ENCODE measurements at regions of chr2 and their contacts with region 1.

Region 1: DNA sequence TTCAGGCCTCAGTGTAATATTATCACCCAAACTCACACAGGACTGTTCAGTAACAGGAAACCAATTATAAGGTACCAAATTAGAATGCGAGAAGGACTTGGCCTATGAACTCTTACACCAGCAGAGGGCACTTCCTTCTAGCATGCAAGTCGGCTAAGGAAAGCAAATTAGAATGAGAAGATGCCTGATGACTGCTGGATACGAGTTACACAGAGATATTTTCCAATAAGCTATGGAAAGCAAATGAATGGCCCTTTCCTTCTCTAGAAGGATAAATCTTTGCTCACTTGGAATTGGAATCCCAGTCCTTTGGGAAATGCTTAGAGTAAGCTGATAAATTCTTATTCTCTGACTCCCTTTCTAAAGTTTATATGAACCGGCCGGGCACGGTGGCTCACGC is 109.8 kb downstream of the AP1S3 start:
- DNase-seq: peak; percentile 72 to 73
- H3K4me3 ChIP-seq: no peak overlapping the region
- H3K4me3 Mint-ChIP-seq: no peak overlapping the region
- H3K27ac Mint-ChIP-seq: no peak overlapping the region
- H3K4me1 ChIP-seq: peaks cover 32% of the 10 kb centered on the region
- H3K4me1 Mint-ChIP-seq: peaks cover 21% of the 10 kb centered on the region
- H3K27me3 ChIP-seq: no peaks in the 10 kb centered on the region
- H3K27me3 Mint-ChIP-seq: no peaks in the 10 kb centered on the region
- CTCF ChIP-seq: peak; percentile 82 to 88

Region 2: GRCh38 chr2:223501641-223502040 is 225.9 kb before region 1 on chr2:
- CTCF ChIA-PET with region 1: no interaction called
- POLR2A ChIA-PET with region 1: no interaction called
- intact Hi-C with region 1: no loop called
- DNase-seq: no peak
- H3K4me3 ChIP-seq: no peak overlapping the region
- H3K4me3 Mint-ChIP-seq: no peak overlapping the region
- H3K27ac Mint-ChIP-seq: no peak overlapping the region
- H3K4me1 ChIP-seq: no peaks in the 10 kb centered on the region
- H3K4me1 Mint-ChIP-seq: no peaks in the 10 kb centered on the region
- H3K27me3 ChIP-seq: 0 out of 2 replicates have a peak, but pooled peaks cover 4% of the 10 kb centered on the region
- H3K27me3 Mint-ChIP-seq: peaks cover 11% of the 10 kb centered on the region
- CTCF ChIP-seq: no peak

Region 3: GRCh38 chr2:223641097-223641496 is 86.5 kb before region 1 on chr2:
- CTCF ChIA-PET with region 1: no interaction called
- POLR2A ChIA-PET with region 1: no interaction called
- intact Hi-C with region 1: no loop called
- DNase-seq: peak; percentile 28 to 54
- H3K4me3 ChIP-seq: no peak overlapping the region
- H3K4me3 Mint-ChIP-seq: no peak overlapping the region
- H3K27ac Mint-ChIP-seq: no peak overlapping the region
- H3K4me1 ChIP-seq: no peaks in the 10 kb centered on the region
- H3K4me1 Mint-ChIP-seq: no peaks in the 10 kb centered on the region
- H3K27me3 ChIP-seq: no peaks in the 10 kb centered on the region
- H3K27me3 Mint-ChIP-seq: no peaks in the 10 kb centered on the region
- CTCF ChIP-seq: no peak

Region 4: GRCh38 chr2:223674998-223675609 is 52.5 kb before region 1 on chr2:
- CTCF ChIA-PET with region 1: no interaction called
- POLR2A ChIA-PET with region 1: no interaction called
- intact Hi-C with region 1: loop called (anchors 1 kb)
- DNase-seq: peak; percentile 52 to 70
- H3K4me3 ChIP-seq: no peak overlapping the region
- H3K4me3 Mint-ChIP-seq: no peak overlapping the region
- H3K27ac Mint-ChIP-seq: no peak overlapping the region
- H3K4me1 ChIP-seq: no peaks in the 10 kb centered on the region
- H3K4me1 Mint-ChIP-seq: peaks cover 7% of the 10 kb centered on the region
- H3K27me3 ChIP-seq: no peaks in the 10 kb centered on the region
- H3K27me3 Mint-ChIP-seq: peaks cover 3% of the 10 kb centered on the region
- CTCF ChIP-seq: peak; percentile 88 to 97

Region 5: GRCh38 chr2:223692191-223692947 is 35.2 kb before region 1 on chr2:
- CTCF ChIA-PET with region 1: interaction called, 5 read pairs
- POLR2A ChIA-PET with region 1: no interaction called
- intact Hi-C with region 1: loop called (anchors 1 kb)
- DNase-seq: peak; percentile 71 to 76
- H3K4me3 ChIP-seq: no peak overlapping the region
- H3K4me3 Mint-ChIP-seq: no peak overlapping the region
- H3K27ac Mint-ChIP-seq: no peak overlapping the region
- H3K4me1 ChIP-seq: no peaks in the 10 kb centered on the region
- H3K4me1 Mint-ChIP-seq: no peaks in the 10 kb centered on the region
- H3K27me3 ChIP-seq: no peaks in the 10 kb centered on the region
- H3K27me3 Mint-ChIP-seq: no peaks in the 10 kb centered on the region
- CTCF ChIP-seq: peak; percentile 75 to 96

Region 6: DNA sequence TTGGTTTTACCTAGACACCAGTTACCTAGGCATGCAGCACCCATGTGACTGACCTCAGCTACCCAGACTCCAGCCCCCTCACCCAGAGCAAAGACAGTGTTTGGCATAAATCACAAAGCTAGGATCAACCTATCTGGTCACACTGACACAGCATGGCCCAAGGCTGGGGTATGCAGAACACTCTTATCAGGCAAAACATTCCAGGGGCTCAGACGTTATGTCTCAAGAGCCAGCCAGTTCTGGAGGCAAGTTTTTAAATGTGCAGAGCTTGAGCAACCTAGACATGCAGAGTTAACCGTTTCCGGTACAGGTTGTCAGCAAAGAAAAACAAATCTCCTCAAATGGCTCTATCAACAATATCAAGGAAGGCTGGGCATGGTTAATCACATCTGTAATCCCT is 17.0 kb after region 1 on chr2:
- CTCF ChIA-PET with region 1: interaction called, 8 read pairs
- POLR2A ChIA-PET with region 1: no interaction called
- intact Hi-C with region 1: loop called (anchors 1 kb)
- DNase-seq: peak; percentile 89 to 90
- H3K4me3 ChIP-seq: no peak overlapping the region
- H3K4me3 Mint-ChIP-seq: peak overlapping the region; percentile 52
- H3K27ac Mint-ChIP-seq: peak overlapping the region; percentile 85
- H3K4me1 ChIP-seq: peaks cover 34% of the 10 kb centered on the region
- H3K4me1 Mint-ChIP-seq: peaks cover 37% of the 10 kb centered on the region
- H3K27me3 ChIP-seq: no peaks in the 10 kb centered on the region
- H3K27me3 Mint-ChIP-seq: no peaks in the 10 kb centered on the region
- CTCF ChIP-seq: no peak

Region 7: DNA sequence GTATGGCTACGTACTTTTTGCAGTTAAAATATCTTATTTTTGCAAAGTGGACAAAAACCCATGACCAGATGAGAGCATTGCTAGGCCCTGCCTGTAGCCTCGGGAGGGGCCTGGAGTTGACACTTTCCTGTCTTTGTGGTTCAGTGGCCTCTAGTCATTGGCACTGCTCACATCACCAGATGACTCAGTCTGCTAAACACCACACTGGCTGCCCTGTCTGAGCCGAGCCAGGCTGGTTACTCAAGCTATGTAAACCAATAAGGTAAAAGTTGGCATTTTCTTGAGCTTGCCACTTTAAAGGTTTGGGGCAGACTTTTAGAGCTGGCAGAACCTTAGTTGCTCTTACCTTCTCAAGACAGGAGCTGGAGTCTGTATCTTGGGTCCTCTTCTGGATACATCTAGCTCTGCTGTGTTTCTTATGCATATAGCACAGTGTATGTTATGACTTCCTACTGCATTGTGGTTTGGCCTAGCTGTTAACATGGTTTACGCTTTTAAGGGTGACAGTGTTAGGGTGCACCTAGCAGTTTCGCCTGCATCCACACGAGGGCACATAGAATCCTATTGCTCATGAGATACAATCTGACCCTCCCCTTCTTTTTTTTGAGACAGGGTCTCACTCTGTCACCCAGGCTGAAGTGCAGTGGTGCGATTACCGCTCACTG is 33.4 kb after region 1 on chr2:
- CTCF ChIA-PET with region 1: interaction called, 4 read pairs
- POLR2A ChIA-PET with region 1: no interaction called
- intact Hi-C with region 1: loop called (anchors 1 kb)
- DNase-seq: no peak
- H3K4me3 ChIP-seq: no peak overlapping the region
- H3K4me3 Mint-ChIP-seq: no peak overlapping the region
- H3K27ac Mint-ChIP-seq: peak overlapping the region; percentile 94
- H3K4me1 ChIP-seq: peaks cover 42% of the 10 kb centered on the region
- H3K4me1 Mint-ChIP-seq: peaks cover 48% of the 10 kb centered on the region
- H3K27me3 ChIP-seq: no peaks in the 10 kb centered on the region
- H3K27me3 Mint-ChIP-seq: no peaks in the 10 kb centered on the region
- CTCF ChIP-seq: no peak

Region 8: DNA sequence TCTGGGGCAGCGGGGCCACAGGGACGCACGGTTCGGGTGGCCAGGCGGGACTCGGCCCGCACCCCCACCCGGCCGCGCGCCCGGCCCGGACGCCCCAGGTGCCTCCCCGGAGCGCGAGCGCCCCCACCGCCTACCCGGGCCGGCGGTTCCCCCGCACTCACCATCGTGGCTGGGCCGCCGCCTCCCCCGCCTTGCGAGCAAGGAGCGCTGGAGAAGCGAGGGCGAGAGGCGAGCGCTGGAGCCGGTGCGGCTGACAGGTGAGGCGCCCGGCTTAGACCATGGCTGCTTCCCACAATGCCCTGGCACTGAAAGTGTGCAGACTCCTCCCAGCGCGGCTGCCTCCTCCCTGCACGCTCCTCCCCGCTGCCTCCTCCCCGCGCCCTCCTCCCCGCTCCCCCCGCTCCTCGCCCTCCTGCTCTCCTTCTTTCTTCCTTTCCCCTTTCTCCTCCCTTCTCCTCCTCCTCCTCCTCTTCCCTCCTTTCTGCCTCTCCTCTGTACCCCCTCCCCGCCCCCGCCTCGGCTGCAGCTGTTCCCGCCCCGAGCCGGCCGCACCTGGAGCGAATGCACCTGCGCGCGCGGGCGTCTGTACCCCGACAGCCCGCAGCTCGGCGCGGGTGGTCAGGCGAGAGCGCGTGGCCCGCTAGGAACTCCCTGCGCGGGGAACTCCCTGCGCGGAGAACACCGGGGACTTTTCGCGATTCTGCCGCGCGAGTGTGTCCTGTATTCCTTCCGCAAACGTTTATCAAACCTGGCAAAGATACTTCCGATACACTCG is 109.9 kb after region 1 on chr2 and contains the start of gene AP1S3:
- CTCF ChIA-PET with region 1: no interaction called
- POLR2A ChIA-PET with region 1: no interaction called
- intact Hi-C with region 1: loop called (anchors 1 kb)
- DNase-seq: peak; percentile 97 to 98
- H3K4me3 ChIP-seq: peak within 1 kb of the TSS; percentile 80
- H3K4me3 Mint-ChIP-seq: peak within 1 kb of the TSS; percentile 90
- H3K27ac Mint-ChIP-seq: peak within 1 kb of the TSS; percentile 75
- H3K4me1 ChIP-seq: peaks cover 40% of the 10 kb centered on the region
- H3K4me1 Mint-ChIP-seq: peaks cover 48% of the 10 kb centered on the region
- H3K27me3 ChIP-seq: no peaks in the 10 kb centered on the region
- H3K27me3 Mint-ChIP-seq: no peaks in the 10 kb centered on the region
- CTCF ChIP-seq: peak in 1 of 2 experiments; percentile 21
- total RNA-seq, gene AP1S3: 180 TPM in 2 replicates